CD4-positive, alpha-beta memory T cell (primary cell): ENCODE measurements at regions of chr6 and their contacts with region 1.

Region 1: GRCh38 chr6:31739639-31740396 is at the start of gene MSH5:
- DNase-seq: peak; percentile 92 to 97 (median 94)
- H3K4me3 ChIP-seq: peak within 1 kb of the TSS; percentile 82
- H3K4me3 Mint-ChIP-seq: peak within 1 kb of the TSS; percentile 89 to 99 (median 98)
- H3K27ac ChIP-seq: peak within 1 kb of the TSS; percentile 64
- H3K27ac Mint-ChIP-seq: peak within 1 kb of the TSS; percentile 94 to 97 (median 95)
- H3K4me1 ChIP-seq: peaks cover 42% of the 10 kb centered on the region
- H3K4me1 Mint-ChIP-seq: peaks cover 33 to 64% (median 51%) of the 10 kb centered on the region in 4 donors
- H3K27me3 ChIP-seq: no peaks in the 10 kb centered on the region
- H3K27me3 Mint-ChIP-seq: no peaks in the 10 kb centered on the region
- total RNA-seq, gene MSH5: 11.4 to 12.1 TPM

Region 2: GRCh38 chr6:31379850-31380249 is 360.0 kb before region 1 on chr6:
- CTCF ChIA-PET with region 1: no interaction called
- POLR2A ChIA-PET with region 1: no interaction called
- intact Hi-C with region 1: no loop called
- DNase-seq: no peak
- H3K4me3 ChIP-seq: no peak overlapping the region
- H3K4me3 Mint-ChIP-seq: no peak overlapping the region
- H3K27ac ChIP-seq: no peak overlapping the region
- H3K27ac Mint-ChIP-seq: no peak overlapping the region
- H3K4me1 ChIP-seq: no peaks in the 10 kb centered on the region
- H3K4me1 Mint-ChIP-seq: no peaks in the 10 kb centered on the region
- H3K27me3 ChIP-seq: peaks cover 7% of the 10 kb centered on the region
- H3K27me3 Mint-ChIP-seq: peaks cover 13 to 14% of the 10 kb centered on the region in 2 donors

Region 3: GRCh38 chr6:31769684-31770371 is 30.0 kb after region 1 on chr6:
- CTCF ChIA-PET with region 1: interaction called, 173 read pairs
- POLR2A ChIA-PET with region 1: interaction called, 78 read pairs
- intact Hi-C with region 1: loop called (anchors 2 kb)
- DNase-seq: peak; percentile 75 to 81 (median 80)
- H3K4me3 ChIP-seq: no peak overlapping the region
- H3K4me3 Mint-ChIP-seq: peak overlapping the region in 2 of 8 donors; percentile 42 to 57
- H3K27ac ChIP-seq: no peak overlapping the region
- H3K27ac Mint-ChIP-seq: peak overlapping the region in 5 of 7 donors; percentile 0 to 65 (median 36)
- H3K4me1 ChIP-seq: peaks cover 35% of the 10 kb centered on the region
- H3K4me1 Mint-ChIP-seq: peaks cover 15 to 34% (median 24%) of the 10 kb centered on the region in 4 donors
- H3K27me3 ChIP-seq: no peaks in the 10 kb centered on the region
- H3K27me3 Mint-ChIP-seq: no peaks in the 10 kb centered on the region

Region 4: GRCh38 chr6:31795616-31796298 is 55.9 kb after region 1 on chr6 and contains the start of gene VARS1:
- CTCF ChIA-PET with region 1: interaction called, 15 read pairs
- POLR2A ChIA-PET with region 1: interaction called, 42 read pairs
- intact Hi-C with region 1: loop called (anchors 1 kb)
- DNase-seq: peak; percentile 83 to 90 (median 84)
- H3K4me3 ChIP-seq: peak within 1 kb of the TSS; percentile 72 to 96
- H3K4me3 Mint-ChIP-seq: peak within 1 kb of the TSS; percentile 94 to 99 (median 97)
- H3K27ac ChIP-seq: peak within 1 kb of the TSS; percentile 95
- H3K27ac Mint-ChIP-seq: peak within 1 kb of the TSS; percentile 63 to 99 (median 98)
- H3K4me1 ChIP-seq: peaks cover 55% of the 10 kb centered on the region
- H3K4me1 Mint-ChIP-seq: peaks cover 22 to 64% (median 37%) of the 10 kb centered on the region in 4 donors
- H3K27me3 ChIP-seq: no peaks in the 10 kb centered on the region
- H3K27me3 Mint-ChIP-seq: no peaks in the 10 kb centered on the region
- total RNA-seq, gene VARS1: 39.6 to 46.8 TPM

Region 5: DNA sequence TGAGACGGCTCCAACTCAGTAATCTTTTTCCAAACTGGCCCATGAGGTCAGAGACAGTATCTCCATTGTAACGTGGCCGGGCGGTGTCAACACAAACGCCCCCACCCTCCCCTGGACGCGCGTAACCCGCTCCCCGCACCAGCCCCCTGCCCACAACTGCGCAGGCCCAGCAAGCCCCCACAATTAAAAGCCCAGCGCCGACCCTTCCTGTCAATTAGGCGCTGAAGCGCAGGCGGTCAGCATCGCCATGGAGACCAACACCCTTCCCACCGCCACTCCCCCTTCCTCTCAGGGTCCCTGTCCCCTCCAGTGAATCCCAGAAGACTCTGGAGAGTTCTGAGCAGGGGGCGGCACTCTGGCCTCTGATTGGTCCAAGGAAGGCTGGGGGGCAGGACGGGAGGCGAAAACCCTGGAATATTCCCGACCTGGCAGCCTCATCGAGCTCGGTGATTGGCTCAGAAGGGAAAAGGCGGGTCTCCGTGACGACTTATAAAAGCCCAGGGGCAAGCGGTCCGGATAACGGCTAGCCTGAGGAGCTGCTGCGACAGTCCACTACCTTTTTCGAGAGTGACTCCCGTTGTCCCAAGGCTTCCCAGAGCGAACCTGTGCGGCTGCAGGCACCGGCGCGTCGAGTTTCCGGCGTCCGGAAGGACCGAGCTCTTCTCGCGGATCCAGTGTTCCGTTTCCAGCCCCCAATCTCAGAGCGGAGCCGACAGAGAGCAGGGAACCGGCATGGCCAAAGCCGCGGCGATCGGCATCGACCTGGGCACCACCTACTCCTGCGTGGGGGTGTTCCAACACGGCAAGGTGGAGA is 75.4 kb after region 1 on chr6 and contains the starts of genes HSPA1A and HSPA1L:
- CTCF ChIA-PET with region 1: interaction called, 7 read pairs
- POLR2A ChIA-PET with region 1: interaction called, 76 read pairs
- intact Hi-C with region 1: no loop called
- DNase-seq: peak; percentile 38 to 69 (median 42)
- H3K4me3 ChIP-seq: peak within 1 kb of the TSS; percentile 81 to 97
- H3K4me3 Mint-ChIP-seq: peak within 1 kb of the TSS; percentile 91 to 96 (median 94)
- H3K27ac ChIP-seq: peak within 1 kb of the TSS; percentile 82
- H3K27ac Mint-ChIP-seq: peak within 1 kb of the TSS; percentile 88 to 95 (median 92)
- H3K4me1 ChIP-seq: peaks cover 50% of the 10 kb centered on the region
- H3K4me1 Mint-ChIP-seq: peaks cover 31 to 66% (median 46%) of the 10 kb centered on the region in 4 donors
- H3K27me3 ChIP-seq: no peaks in the 10 kb centered on the region
- H3K27me3 Mint-ChIP-seq: no peaks in the 10 kb centered on the region
- total RNA-seq, gene HSPA1A: 69.9 to 71.5 TPM
- total RNA-seq, gene HSPA1L: 8.2 to 8.3 TPM